ENCODE measurements at regions of chr9 and their contacts with region 1.

Region 1: GRCh38 chr9:134858051-134858841 is 22.4 kb upstream of the FCN2 start:
- DNase-seq: peak; percentile 82
- ATAC-seq: peak; percentile 97
- H3K4me3 Mint-ChIP-seq: peak overlapping the region; percentile 19
- H3K27ac Mint-ChIP-seq: peak overlapping the region; percentile 89
- H3K4me1 Mint-ChIP-seq: peaks cover 17% of the 10 kb centered on the region
- H3K27me3 Mint-ChIP-seq: peaks cover 25% of the 10 kb centered on the region

Region 2: DNA sequence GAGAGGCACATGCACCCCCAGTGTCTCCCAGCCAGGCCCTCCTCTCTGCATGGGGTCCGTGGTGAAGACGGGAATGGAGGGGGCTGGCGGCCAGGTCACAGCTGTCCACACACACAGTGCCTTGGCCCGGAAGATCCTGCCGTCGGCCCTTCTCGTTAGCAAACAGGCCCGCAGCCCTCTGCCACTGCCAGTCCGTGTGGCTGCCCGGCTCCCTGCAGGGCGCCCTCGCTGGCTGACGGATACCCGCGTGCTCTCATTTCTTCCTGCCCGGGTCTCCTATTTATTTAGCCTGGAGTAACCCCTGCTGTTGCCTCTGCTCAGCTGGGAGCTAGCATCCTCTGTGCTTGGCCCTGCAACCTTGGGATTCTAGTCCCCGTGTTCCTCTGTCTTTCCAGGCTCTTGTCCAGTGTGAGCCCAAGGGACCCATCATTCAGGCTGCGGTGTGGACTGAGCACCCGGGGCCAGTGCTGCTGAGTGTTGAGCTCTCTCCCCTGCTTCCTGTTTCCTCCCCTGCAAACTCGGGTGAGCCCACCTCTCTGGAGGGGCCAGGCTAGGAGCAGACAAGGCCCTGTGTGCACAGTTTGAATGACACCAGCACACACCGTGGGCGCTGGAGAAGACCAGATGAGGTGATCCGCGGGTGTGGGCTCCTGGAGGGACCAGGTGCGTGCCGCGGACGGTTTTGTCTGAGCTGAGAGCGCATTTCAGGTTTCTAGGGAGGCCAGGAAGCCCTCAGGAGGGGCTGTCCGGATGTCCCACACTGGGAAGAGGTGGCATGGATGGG is 679.3 kb before region 1 on chr9:
- CTCF ChIA-PET with region 1: no interaction called
- POLR2A ChIA-PET with region 1: no interaction called
- intact Hi-C with region 1: loop called in 1 of 2 experiments (anchors 10 kb)
- DNase-seq: peak; percentile 3
- ATAC-seq: no peak
- H3K4me3 Mint-ChIP-seq: no peak overlapping the region
- H3K27ac Mint-ChIP-seq: no peak overlapping the region
- H3K4me1 Mint-ChIP-seq: peaks cover 17% of the 10 kb centered on the region
- H3K27me3 Mint-ChIP-seq: no peaks in the 10 kb centered on the region

Region 3: DNA sequence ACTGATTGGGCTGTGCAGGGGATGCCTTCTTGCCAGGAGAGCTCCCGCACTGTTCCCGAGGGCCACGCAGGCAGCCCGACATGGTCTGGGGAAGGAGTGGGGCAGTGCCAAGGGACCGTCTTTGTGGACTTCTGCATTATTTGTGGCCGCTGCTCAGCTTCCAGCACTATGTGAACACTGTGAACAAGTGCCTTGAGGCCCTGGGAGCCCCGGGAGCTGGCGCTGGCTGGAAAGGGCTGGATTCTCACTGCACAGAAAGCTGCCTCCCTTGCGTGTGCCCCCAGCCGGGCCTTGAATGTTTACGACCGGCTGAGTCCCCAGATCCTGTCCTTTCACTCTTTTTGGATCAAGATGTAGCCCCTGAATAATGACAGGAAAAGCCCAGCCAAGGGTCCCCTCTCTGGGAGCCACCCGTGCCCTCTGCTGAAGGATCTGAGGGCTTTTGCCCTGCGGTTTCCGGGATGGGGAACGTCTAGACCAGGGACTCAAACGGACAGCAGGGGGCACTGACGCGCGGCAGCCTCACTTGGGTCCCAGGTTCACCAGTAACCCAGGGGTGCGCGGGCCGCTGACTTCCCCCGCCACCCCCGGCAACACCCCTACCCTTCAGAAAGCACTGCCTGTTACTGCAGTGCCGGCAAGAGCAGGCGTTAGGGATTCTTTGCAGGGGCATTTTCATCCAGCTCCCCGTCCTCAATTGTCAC is 76.5 kb before region 1 on chr9:
- CTCF ChIA-PET with region 1: no interaction called
- POLR2A ChIA-PET with region 1: no interaction called
- intact Hi-C with region 1: loop called in 1 of 2 experiments (anchors 1 kb)
- DNase-seq: peak; percentile 32
- ATAC-seq: no peak
- H3K4me3 Mint-ChIP-seq: no peak overlapping the region
- H3K27ac Mint-ChIP-seq: no peak overlapping the region
- H3K4me1 Mint-ChIP-seq: no peaks in the 10 kb centered on the region
- H3K27me3 Mint-ChIP-seq: no peaks in the 10 kb centered on the region

Measured in activated CD4-positive, alpha-beta T cell treated with anti-CD3 and anti-CD28 coated beads for 36 hours (primary cell).